Thyroid gland (tissue), 4 donors: ENCODE measurements at regions of chr3 and their contacts with region 1.

Region 1: GRCh38 chr3:55485211-55485791 is 1.8 kb downstream of the WNT5A start:
- DNase-seq: peak; percentile 80 to 85
- H3K4me3 ChIP-seq: peak overlapping the region in 2 of 3 donors; percentile 72 to 90
- H3K27ac ChIP-seq: peak overlapping the region; percentile 61 to 78 (median 74)
- H3K4me1 ChIP-seq: peaks cover 17 to 30% of the 10 kb centered on the region in 2 donors
- H3K27me3 ChIP-seq: no peaks in the 10 kb centered on the region
- CTCF ChIP-seq: peak; percentile 47 to 96 (median 69)
- POLR2A ChIP-seq: peak in 1 of 2 donors; percentile 17

Region 2: GRCh38 chr3:55746808-55747413 is 261.6 kb after region 1 on chr3:
- intact Hi-C with region 1: loop called (anchors 10 kb)
- DNase-seq: no peak
- H3K4me3 ChIP-seq: no peak overlapping the region
- H3K27ac ChIP-seq: no peak overlapping the region
- H3K4me1 ChIP-seq: peaks cover 0 to 10% of the 10 kb centered on the region in 2 donors
- H3K27me3 ChIP-seq: no peaks in the 10 kb centered on the region
- CTCF ChIP-seq: peak in 4 of 6 experiments; percentile 25 to 51 (median 43)
- POLR2A ChIP-seq: no peak

Region 3: GRCh38 chr3:56251343-56251945 is 766.1 kb after region 1 on chr3:
- intact Hi-C with region 1: loop called (anchors 5 kb)
- DNase-seq: peak; percentile 37 to 38
- H3K4me3 ChIP-seq: no peak overlapping the region
- H3K27ac ChIP-seq: no peak overlapping the region
- H3K4me1 ChIP-seq: no peaks in the 10 kb centered on the region
- H3K27me3 ChIP-seq: no peaks in the 10 kb centered on the region
- CTCF ChIP-seq: peak; percentile 39 to 83 (median 77)
- POLR2A ChIP-seq: no peak